WTC11 (cell line): ENCODE measurements at regions of chr1 and their contacts with region 1.

Region 1: GRCh38 chr1:37315371-37315846 is 159.0 kb upstream of the ZC3H12A start:
- DNase-seq: peak; percentile 36
- ATAC-seq: peak; percentile 73
- H3K4me3 Mint-ChIP-seq: peak overlapping the region; percentile 42
- H3K27ac Mint-ChIP-seq: peak overlapping the region; percentile 78
- H3K4me1 Mint-ChIP-seq: peaks cover 62% of the 10 kb centered on the region
- H3K27me3 Mint-ChIP-seq: peaks cover 29% of the 10 kb centered on the region
- CTCF ChIP-seq: no peak

Region 2: DNA sequence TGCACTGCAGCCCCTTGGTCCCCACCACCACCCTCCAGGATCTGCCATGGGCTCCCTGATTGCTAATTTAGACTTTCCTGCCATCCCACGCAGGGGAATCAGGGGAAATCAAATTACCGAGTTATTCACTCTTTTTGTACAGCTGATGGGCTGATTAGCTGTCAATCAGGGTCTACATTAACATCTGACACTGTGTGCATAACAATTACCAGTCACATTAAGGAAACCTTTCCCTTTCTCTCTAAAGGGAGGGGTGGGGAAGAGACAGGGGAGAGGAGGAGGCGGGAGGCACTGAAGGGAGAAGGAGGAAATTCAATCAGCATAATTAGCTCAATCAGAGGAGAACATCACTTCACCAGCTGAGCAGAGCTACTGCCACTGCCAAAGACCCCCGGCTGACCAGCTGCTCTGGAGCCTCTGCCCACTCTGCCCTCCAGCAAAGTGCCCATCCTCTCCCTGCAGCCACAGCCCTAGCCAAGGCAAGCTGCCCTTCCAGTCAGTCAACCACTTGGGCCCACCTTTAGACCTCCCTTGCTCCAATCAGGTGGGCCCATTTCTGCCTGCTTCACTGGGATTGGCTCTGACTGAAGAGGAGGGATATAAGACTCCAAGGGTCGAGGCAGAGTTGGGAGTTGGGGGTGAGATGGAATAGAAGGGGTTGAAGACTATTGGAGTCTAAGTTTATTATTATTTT is 40.3 kb before region 1 on chr1:
- CTCF ChIA-PET with region 1: interaction called, 12 read pairs
- POLR2A ChIA-PET with region 1: no interaction called
- DNase-seq: no peak
- ATAC-seq: peak; percentile 85
- H3K4me3 Mint-ChIP-seq: no peak overlapping the region
- H3K27ac Mint-ChIP-seq: no peak overlapping the region
- H3K4me1 Mint-ChIP-seq: peaks cover 32% of the 10 kb centered on the region
- H3K27me3 Mint-ChIP-seq: no peaks in the 10 kb centered on the region; the same call in 1 of the 2 replicates
- CTCF ChIP-seq: no peak